AG04449 (cell line): ENCODE measurements at regions of chr10 and their contacts with region 1.

Region 1: DNA sequence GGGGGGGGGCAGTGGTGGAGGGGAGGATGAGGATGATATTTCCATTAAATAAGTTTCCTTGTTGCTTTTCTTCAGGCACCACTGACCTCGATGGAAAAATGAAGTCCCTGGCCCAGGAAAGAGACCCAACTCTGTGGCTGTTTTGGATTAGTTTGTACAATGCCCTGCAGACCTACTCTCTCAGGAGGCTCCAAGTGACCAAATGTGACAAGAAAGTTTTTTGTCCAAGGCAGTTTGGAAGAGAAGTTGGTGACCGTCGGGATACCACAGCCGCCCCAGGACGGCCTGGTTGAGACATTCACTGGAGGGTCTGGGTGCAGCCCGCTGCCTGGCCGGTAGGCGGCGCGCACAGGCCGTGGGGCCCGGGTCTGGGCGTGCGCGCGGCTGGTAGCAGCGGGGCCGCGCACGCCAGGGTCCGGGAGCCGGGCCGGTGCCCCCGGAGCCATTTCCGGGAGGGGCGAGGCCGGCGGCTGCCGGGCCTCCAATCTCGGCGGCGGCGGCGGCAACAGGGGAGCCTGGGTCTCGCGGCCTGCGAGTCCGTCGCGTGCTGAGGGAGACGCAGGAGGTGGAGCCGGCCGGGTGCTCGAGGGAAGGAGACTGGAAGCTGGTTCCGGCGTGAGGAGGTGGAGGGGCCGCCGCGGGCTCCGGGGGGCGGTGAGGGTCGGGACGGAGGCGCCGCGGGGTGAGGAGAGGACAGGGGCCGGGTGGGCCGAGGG is at the start of gene SGPL1:
- DNase-seq: no peak
- H3K4me3 ChIP-seq: peak within 1 kb of the TSS; percentile 91
- CTCF ChIP-seq: peak; percentile 89

Region 2: DNA sequence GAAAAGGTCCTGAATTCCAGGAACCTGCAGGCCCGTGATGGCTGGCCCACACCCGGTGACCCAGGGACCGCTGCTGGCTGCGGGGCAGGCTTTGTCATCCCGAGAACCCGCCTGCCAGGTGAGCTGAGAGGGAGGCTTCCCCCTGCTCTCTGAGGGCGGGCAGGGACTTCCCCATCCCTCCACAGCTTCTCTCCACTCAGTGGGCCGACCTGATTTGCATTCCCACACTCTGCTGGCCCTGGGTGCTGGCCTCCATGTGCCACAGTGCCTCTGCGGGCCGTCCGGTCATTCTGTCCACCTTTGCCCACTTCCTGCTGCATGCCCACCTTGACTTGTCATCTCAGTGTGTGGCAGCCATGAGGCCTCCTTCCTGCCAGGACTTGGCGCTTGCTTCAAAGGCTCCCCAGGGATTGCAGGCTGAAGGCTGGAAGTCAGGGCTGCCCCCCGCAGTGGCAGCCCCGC is 301.8 kb before region 1 on chr10:
- CTCF ChIA-PET with region 1: no interaction called
- POLR2A ChIA-PET with region 1: no interaction called
- DNase-seq: no peak
- H3K4me3 ChIP-seq: no peak overlapping the region
- CTCF ChIP-seq: no peak

Region 3: GRCh38 chr10:70722820-70723424 is 92.7 kb before region 1 on chr10:
- CTCF ChIA-PET with region 1: no interaction called
- POLR2A ChIA-PET with region 1: no interaction called
- DNase-seq: peak; percentile 16
- H3K4me3 ChIP-seq: no peak overlapping the region
- CTCF ChIP-seq: no peak

Region 4: GRCh38 chr10:70765794-70766594 is 49.7 kb before region 1 on chr10:
- CTCF ChIA-PET with region 1: no interaction called
- POLR2A ChIA-PET with region 1: no interaction called
- DNase-seq: no peak
- H3K4me3 ChIP-seq: no peak overlapping the region
- CTCF ChIP-seq: no peak

Region 5: DNA sequence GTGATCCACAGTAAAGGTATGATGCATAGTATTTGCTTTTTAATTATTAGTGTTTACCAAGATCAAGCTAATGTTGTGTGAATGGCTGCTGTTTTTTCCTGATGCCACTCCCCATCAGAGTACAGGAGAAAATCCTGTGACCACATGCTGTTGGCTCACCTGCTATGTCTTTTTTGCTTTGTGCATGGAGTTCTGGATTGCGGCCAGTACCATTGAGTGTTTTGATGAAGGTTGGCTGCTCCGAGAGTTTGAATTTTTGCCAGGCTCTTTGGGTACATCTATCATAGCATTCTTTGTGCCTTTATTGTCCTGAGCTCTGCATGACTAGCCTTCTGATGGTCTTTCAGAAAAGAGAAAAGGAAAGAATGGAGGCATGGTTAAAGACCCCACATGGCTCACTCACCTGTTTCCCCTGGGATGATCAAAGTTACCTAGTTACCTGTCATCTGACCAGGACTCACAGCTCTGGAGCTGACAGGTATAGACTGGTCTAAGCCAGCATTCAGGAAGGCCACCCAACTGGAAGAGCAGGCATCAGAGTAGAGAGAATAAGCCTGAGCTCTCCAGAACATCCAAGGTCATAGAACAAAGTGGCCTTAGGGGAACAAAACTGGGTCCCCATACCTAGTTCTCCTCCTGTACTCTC is 11.8 kb before region 1 on chr10:
- CTCF ChIA-PET with region 1: interaction called, 23 read pairs
- POLR2A ChIA-PET with region 1: no interaction called
- DNase-seq: no peak
- H3K4me3 ChIP-seq: no peak overlapping the region
- CTCF ChIP-seq: no peak

Region 6: GRCh38 chr10:70832852-70833528 is 17.3 kb after region 1 on chr10:
- CTCF ChIA-PET with region 1: interaction called, 14 read pairs
- POLR2A ChIA-PET with region 1: interaction called, 8 read pairs
- DNase-seq: peak; percentile 88
- H3K4me3 ChIP-seq: no peak overlapping the region
- CTCF ChIP-seq: no peak